HCT116 (cell line): ENCODE measurements at regions of chr5 and their contacts with region 1.

Region 1: GRCh38 chr5:10353241-10354047 is at the start of gene MARCHF6:
- DNase-seq: peak; percentile 83
- ATAC-seq: peak; percentile 85
- H3K4me3 ChIP-seq: peak within 1 kb of the TSS; percentile 85 to 91
- H3K27ac ChIP-seq: peak within 1 kb of the TSS; percentile 97
- H3K4me1 ChIP-seq: peaks cover 20 to 34% of the 10 kb centered on the region in 2 experiments
- H3K27me3 ChIP-seq: no peaks in the 10 kb centered on the region
- CTCF ChIP-seq: no peak
- POLR2A ChIP-seq: peak; percentile 90
- RAD21 ChIP-seq: no peak
- total RNA-seq, gene MARCHF6: 144 TPM

Region 2: GRCh38 chr5:10307206-10308148 is 46.0 kb before region 1 on chr5 and contains the start of gene CMBL:
- CTCF ChIA-PET with region 1: no interaction called
- POLR2A ChIA-PET with region 1: interaction called, 14 read pairs
- RAD21 ChIA-PET with region 1: no interaction called
- intact Hi-C with region 1: loop called (anchors 5 kb)
- DNase-seq: peak; percentile 46
- ATAC-seq: peak; percentile 83
- H3K4me3 ChIP-seq: peak within 1 kb of the TSS; percentile 61 to 95
- H3K27ac ChIP-seq: peak within 1 kb of the TSS; percentile 84
- H3K4me1 ChIP-seq: peaks cover 44 to 56% of the 10 kb centered on the region in 2 experiments
- H3K27me3 ChIP-seq: no peaks in the 10 kb centered on the region
- CTCF ChIP-seq: no peak
- POLR2A ChIP-seq: peak; percentile 36
- RAD21 ChIP-seq: no peak
- total RNA-seq, gene CMBL: 51.0 TPM

Region 3: DNA sequence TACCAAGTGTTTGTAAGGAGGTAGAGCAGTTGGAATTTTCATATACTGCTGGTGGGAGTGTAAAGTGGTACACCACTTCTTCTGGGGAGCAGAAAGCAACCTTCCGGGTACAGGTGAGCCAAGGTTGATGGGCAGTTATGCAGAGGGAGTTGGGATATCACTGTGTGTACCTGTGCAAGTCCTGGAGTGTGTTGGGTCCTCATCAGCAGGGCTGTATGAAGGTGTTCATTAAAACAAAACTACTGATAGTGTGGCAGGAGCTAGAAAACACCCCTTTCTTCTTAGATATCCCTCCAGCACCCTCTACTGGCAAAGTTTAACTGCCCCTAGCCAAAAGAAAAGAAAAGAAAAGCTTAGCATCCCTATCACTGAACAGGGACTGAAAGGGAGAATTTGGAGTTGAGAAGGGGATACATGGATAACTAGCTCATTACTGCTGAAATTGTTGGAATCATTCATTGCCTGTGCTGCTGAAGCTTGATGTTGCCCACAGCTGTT is 10.8 kb after region 1 on chr5:
- CTCF ChIA-PET with region 1: interaction called, 17 read pairs
- POLR2A ChIA-PET with region 1: interaction called, 9 read pairs
- RAD21 ChIA-PET with region 1: no interaction called
- intact Hi-C with region 1: no loop called
- DNase-seq: no peak
- ATAC-seq: peak; percentile 66
- H3K4me3 ChIP-seq: no peak overlapping the region
- H3K27ac ChIP-seq: no peak overlapping the region
- H3K4me1 ChIP-seq: peaks cover 8 to 25% of the 10 kb centered on the region in 2 experiments
- H3K27me3 ChIP-seq: no peaks in the 10 kb centered on the region
- CTCF ChIP-seq: peak; percentile 18 to 68 (median 49); a peak in 4 of 6 replicates
- POLR2A ChIP-seq: no peak
- RAD21 ChIP-seq: peak; percentile 58